Colonic mucosa (tissue), 4 donors: ENCODE measurements at regions of chr1 and their contacts with region 1.

Region 1: DNA sequence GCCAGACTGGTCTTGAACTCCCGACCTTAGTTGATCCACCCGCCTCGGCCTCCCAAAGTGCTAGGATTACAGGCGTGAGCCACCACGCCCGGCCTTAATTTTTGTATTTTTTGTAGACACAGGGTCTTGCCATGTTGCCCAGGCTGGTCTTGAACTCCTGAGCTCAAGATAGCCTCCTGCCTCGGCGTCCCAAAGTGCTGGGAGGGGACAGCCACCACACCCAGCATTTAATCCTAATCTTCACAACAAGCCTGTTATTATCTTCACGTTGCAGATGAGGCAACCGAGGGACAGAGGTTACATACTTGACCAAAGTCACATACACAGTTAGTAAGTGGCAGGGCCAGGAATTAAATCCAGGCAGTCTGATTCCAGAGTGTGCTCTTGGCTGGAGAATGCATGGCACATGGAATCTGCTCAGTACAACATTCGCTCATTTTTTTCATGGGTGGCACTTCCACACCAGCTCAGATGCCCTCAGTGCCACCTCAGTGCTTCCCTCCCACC is 4.8 kb upstream of the GPR37L1 start:
- DNase-seq: peak; percentile 42
- H3K4me3 ChIP-seq: no peak overlapping the region
- H3K27ac ChIP-seq: peak overlapping the region; percentile 79
- H3K4me1 ChIP-seq: peaks cover 3% of the 10 kb centered on the region
- H3K27me3 ChIP-seq: no peaks in the 10 kb centered on the region
- CTCF ChIP-seq: no peak

Region 2: DNA sequence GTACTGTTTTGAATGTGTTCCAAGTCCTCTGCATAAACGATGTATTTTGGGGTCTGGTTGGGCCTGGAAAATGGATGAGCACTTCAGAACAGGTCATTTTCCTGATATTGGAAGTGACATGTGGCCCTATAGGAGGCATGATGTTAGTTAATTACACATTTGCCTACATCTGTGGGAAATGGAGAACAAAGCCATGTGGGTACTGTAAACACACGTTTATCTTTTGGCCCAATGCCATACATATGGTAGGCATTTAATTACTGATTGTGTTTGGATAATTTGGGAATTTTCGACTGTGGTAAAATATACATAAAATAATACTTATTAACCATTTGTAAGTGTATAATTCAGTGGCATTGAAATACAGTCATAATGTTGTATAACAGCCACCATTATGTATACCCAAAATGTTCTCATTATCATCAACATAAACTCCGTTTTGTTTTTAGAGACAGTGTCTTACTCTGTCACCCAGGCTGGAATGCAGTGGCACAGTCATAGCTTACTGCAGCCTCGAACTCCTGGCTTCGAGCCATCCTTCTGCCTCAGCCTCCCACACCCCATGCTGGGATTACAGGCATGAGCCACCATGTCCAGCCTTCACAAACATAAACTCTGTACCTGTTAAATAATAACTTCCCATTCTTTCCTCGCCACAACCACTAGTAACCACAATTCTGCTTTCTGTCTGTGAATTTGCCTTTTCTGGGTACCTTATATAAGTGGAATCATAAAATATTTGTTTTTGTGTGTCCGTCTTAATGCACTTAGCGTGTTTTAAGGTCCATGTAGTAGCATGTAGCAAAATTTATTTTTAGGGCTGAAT is 147.4 kb before region 1 on chr1:
- intact Hi-C with region 1: no loop called
- DNase-seq: no peak
- H3K4me3 ChIP-seq: no peak overlapping the region
- H3K27ac ChIP-seq: no peak overlapping the region
- H3K4me1 ChIP-seq: no peaks in the 10 kb centered on the region
- H3K27me3 ChIP-seq: no peaks in the 10 kb centered on the region
- CTCF ChIP-seq: no peak

Region 3: DNA sequence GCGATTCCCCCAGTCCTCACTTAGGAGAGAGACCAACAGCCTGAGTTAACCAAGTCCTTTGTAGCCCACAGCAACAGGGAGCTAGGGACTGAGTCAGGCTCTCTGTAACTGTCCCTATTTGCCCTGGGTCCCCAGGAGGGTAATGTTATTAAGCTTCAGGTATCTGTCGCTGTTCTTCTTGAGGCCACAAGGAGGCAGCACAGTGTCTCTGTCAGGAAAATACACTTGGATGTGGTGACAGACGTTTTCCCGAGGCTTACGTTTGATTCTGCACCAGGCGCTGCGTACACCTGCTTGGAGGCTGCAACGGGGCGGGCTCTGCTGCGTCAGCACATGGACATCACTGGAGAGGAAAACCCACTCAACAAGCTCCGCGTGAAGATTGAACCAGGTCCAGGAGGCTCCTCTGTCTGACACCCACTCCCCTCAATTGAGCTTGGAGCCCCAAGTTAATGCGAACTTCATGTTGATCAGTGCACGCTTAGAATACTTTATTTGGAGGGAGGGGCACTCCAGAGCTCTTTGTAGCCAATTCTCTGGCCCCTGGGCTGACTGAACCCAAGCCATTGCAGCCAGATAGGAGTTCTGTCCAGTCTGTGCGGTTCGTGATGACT is 118.2 kb before region 1 on chr1:
- intact Hi-C with region 1: loop called (anchors 2 kb)
- DNase-seq: no peak
- H3K4me3 ChIP-seq: no peak overlapping the region
- H3K27ac ChIP-seq: no peak overlapping the region
- H3K4me1 ChIP-seq: no peaks in the 10 kb centered on the region
- H3K27me3 ChIP-seq: no peaks in the 10 kb centered on the region
- CTCF ChIP-seq: peak; percentile 58

Region 4: GRCh38 chr1:202438432-202439174 is 320.7 kb after region 1 on chr1:
- intact Hi-C with region 1: no loop called
- DNase-seq: no peak
- H3K4me3 ChIP-seq: no peak overlapping the region
- H3K27ac ChIP-seq: no peak overlapping the region
- H3K4me1 ChIP-seq: no peaks in the 10 kb centered on the region
- H3K27me3 ChIP-seq: no peaks in the 10 kb centered on the region
- CTCF ChIP-seq: no peak

Region 5: DNA sequence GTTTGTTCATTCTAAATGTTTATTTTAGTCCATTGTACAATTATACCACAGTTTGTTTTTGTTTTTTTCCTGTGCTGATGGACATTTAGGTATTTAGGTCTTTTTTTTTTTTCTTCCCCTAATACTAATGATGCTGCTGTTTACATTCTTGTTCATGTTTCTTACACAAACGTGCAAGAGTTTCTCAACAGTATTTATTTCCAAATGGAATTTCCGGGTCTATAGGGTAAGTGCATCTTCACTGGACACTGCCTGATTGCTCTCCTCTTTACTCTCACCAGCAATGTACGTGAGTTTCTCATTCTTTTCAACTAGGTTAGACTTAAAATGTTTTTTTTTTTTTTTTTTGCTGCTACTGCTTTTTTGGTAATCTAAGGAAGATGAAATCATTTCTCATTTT is 353.3 kb after region 1 on chr1:
- intact Hi-C with region 1: no loop called
- DNase-seq: no peak
- H3K4me3 ChIP-seq: no peak overlapping the region
- H3K27ac ChIP-seq: no peak overlapping the region
- H3K4me1 ChIP-seq: no peaks in the 10 kb centered on the region
- H3K27me3 ChIP-seq: no peaks in the 10 kb centered on the region
- CTCF ChIP-seq: no peak